AG04450 (cell line): ENCODE measurements at regions of chr17 and their contacts with region 1.

Region 1: GRCh38 chr17:37047631-37048104 is 98.9 kb downstream of the AATF start:
- DNase-seq: peak; percentile 57
- H3K4me3 ChIP-seq: no peak overlapping the region
- H3K27ac ChIP-seq: no peak overlapping the region
- H3K27me3 ChIP-seq: no peaks in the 10 kb centered on the region
- CTCF ChIP-seq: peak; percentile 90

Region 2: GRCh38 chr17:36601303-36602029 is 446.2 kb before region 1 on chr17 and contains the start of gene MRM1:
- CTCF ChIA-PET with region 1: interaction called, 79 read pairs
- POLR2A ChIA-PET with region 1: no interaction called
- DNase-seq: peak; percentile 76
- H3K4me3 ChIP-seq: peak within 1 kb of the TSS; percentile 95
- H3K27ac ChIP-seq: peak within 1 kb of the TSS; percentile 75
- H3K27me3 ChIP-seq: no peaks in the 10 kb centered on the region
- CTCF ChIP-seq: peak; percentile 16; the same call in 1 of the 2 replicates
- polyA plus RNA-seq, gene MRM1: 2.0 and 2.4 TPM in 2 replicates

Region 3: GRCh38 chr17:36948717-36949460 is 98.8 kb before region 1 on chr17 and contains the start of gene AATF:
- CTCF ChIA-PET with region 1: interaction called, 11 read pairs
- POLR2A ChIA-PET with region 1: no interaction called
- DNase-seq: peak; percentile 90
- H3K4me3 ChIP-seq: peak within 1 kb of the TSS; percentile 88
- H3K27ac ChIP-seq: peak within 1 kb of the TSS; percentile 96
- H3K27me3 ChIP-seq: peaks cover 40% of the 10 kb centered on the region
- CTCF ChIP-seq: no peak
- polyA plus RNA-seq, gene AATF: 16.6 and 18.8 TPM in 2 replicates

Region 4: DNA sequence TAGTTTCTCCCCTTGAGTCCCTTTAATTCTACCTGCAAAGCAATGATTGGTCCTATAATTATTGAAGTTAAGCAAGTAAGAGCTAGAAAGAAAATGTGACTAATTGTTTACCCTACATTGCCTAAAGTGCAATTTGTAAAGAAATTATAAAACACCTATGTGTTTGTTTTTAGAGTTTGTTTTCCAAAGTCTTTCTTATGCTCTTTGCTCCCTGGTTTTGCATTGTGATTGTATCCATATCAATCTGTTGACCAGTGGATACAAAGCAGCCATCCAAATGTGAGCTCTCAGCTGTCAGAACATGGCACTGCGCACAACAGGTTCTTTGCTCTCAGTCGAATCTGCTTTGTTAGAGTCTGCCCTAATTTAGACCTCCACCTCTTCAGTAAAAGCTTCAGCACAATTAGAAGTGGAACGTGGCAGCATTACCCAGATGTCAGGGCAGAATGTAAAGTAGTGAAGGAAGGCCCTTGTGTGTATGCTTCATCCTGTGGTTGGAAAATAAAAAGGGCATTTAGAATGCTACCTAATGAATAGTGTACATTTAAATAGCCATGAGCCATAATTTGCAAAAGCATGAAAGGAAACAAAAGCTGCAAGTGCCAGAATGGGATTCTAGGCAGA is 28.4 kb before region 1 on chr17:
- CTCF ChIA-PET with region 1: interaction called, 13 read pairs
- POLR2A ChIA-PET with region 1: no interaction called
- DNase-seq: no peak
- H3K4me3 ChIP-seq: no peak overlapping the region
- H3K27ac ChIP-seq: no peak overlapping the region
- H3K27me3 ChIP-seq: no peaks in the 10 kb centered on the region
- CTCF ChIP-seq: no peak

Region 5: GRCh38 chr17:37067555-37068111 is 20.0 kb after region 1 on chr17:
- CTCF ChIA-PET with region 1: interaction called, 15 read pairs
- POLR2A ChIA-PET with region 1: no interaction called
- DNase-seq: peak; percentile 38
- H3K4me3 ChIP-seq: no peak overlapping the region
- H3K27ac ChIP-seq: no peak overlapping the region
- H3K27me3 ChIP-seq: peaks cover 31% of the 10 kb centered on the region
- CTCF ChIP-seq: no peak

Region 6: DNA sequence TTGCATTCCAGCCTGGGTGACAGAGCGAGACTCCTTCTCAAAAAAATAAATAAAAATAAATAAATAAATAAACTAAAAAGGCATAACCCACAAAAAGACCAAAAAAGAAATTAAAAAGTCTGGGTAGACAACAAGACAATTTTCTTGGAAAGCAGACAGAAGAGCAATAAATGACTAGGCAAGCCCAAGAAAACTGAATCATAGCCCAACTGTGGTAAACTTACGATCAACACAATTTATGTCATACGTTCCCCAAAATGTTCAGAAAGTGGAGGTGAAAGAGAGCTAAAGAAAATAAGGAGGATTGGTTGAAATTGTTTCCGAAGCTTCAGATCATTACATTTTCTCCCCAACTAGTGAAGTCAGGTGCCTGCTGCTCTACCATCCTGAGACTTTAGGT is 296.9 kb after region 1 on chr17:
- CTCF ChIA-PET with region 1: no interaction called
- POLR2A ChIA-PET with region 1: no interaction called
- DNase-seq: no peak
- H3K4me3 ChIP-seq: no peak overlapping the region
- H3K27ac ChIP-seq: no peak overlapping the region
- H3K27me3 ChIP-seq: no peaks in the 10 kb centered on the region
- CTCF ChIP-seq: no peak